ENCODE measurements at regions of chr17 and their contacts with region 1.

Region 1: DNA sequence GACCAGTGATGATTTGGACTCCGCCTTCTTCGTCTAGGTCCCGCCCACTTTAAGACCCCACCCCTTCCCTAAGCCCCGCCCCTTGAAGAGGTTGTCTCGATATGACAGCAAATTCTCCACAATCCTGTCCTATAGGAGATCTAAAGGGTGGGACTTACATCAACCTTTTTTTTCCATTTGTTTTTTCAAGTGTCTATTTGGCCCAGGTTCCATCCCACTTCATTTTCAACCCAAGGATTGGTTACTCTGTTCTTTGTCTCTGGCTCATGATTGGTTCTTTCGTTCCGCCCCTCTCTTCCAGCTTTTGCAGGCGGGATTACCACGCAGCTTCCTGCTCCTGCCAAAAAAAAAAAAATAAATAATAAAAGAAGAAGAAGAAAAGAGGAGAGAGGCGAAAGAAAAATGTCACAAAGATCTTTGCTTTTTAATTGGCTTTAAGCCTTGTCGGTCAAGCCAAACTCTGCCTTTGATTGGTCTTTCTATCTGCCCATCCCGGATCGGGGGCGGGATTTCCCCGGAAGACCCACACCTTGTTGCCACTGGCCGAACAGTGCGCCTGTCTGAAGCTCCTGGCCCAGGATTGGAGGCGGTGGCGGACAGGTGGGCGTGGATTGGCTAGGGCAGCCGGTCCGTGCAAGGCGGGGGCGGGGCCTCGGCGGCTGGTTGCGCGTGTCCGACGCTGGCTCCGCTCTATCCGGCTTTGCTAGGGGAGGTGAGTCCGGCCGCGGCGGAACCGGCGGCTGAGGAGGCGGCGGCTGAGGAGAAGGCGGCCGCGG is 1.2 kb upstream of the NLK start:
- DNase-seq: peak; percentile 99 to 100 (median 99)
- ATAC-seq: peak; percentile 97
- H3K4me3 ChIP-seq: peak overlapping the region; percentile 64
- H3K27ac ChIP-seq: peak overlapping the region; percentile 64
- H3K4me1 ChIP-seq: peaks cover 16 to 20% of the 10 kb centered on the region in 2 experiments; a peak in 4 of 5 replicates
- H3K27me3 ChIP-seq: no peaks in the 10 kb centered on the region
- CTCF ChIP-seq: peak in 1 of 3 experiments; percentile 37; a peak in 2 of 6 replicates
- EP300 ChIP-seq: no peak
- POLR2A ChIP-seq: peak; percentile 64
- RAD21 ChIP-seq: no peak

Region 2: GRCh38 chr17:27892866-27893769 is 148.1 kb before region 1 on chr17 and contains the start of gene LYRM9:
- CTCF ChIA-PET with region 1: no interaction called
- POLR2A ChIA-PET with region 1: no interaction called
- in situ Hi-C with region 1: no loop called
- intact Hi-C with region 1: loop called (anchors 5 kb)
- DNase-seq: peak; percentile 93 to 98 (median 96)
- ATAC-seq: peak; percentile 99
- H3K4me3 ChIP-seq: peak within 1 kb of the TSS; percentile 47
- H3K27ac ChIP-seq: peak within 1 kb of the TSS; percentile 71
- H3K4me1 ChIP-seq: peaks cover 10 to 35% of the 10 kb centered on the region in 2 experiments
- H3K27me3 ChIP-seq: no peaks in the 10 kb centered on the region
- CTCF ChIP-seq: peak; percentile 84 to 86 (median 84)
- EP300 ChIP-seq: no peak
- POLR2A ChIP-seq: peak; percentile 52; the same call in 1 of the 2 replicates
- RAD21 ChIP-seq: peak; percentile 63 to 65
- polyA plus RNA-seq, gene LYRM9: 1.0 to 1.8 TPM

Region 3: GRCh38 chr17:27985306-27985705 is 56.0 kb before region 1 on chr17:
- CTCF ChIA-PET with region 1: no interaction called
- POLR2A ChIA-PET with region 1: interaction called, 3 read pairs
- in situ Hi-C with region 1: no loop called
- intact Hi-C with region 1: loop called (anchors 2 kb)
- DNase-seq: peak in 1 of 4 experiments; percentile 55
- ATAC-seq: peak; percentile 55
- H3K4me3 ChIP-seq: no peak overlapping the region
- H3K27ac ChIP-seq: peak overlapping the region; percentile 89
- H3K4me1 ChIP-seq: peaks cover 45 to 60% of the 10 kb centered on the region in 2 experiments
- H3K27me3 ChIP-seq: no peaks in the 10 kb centered on the region
- CTCF ChIP-seq: no peak
- EP300 ChIP-seq: no peak
- POLR2A ChIP-seq: no peak
- RAD21 ChIP-seq: no peak

Region 4: GRCh38 chr17:28053044-28053670 is 11.9 kb after region 1 on chr17:
- CTCF ChIA-PET with region 1: no interaction called
- POLR2A ChIA-PET with region 1: interaction called, 15 read pairs
- in situ Hi-C with region 1: no loop called
- intact Hi-C with region 1: no loop called
- DNase-seq: no peak
- ATAC-seq: peak; percentile 34; the same call in 1 of the 3 replicates
- H3K4me3 ChIP-seq: no peak overlapping the region
- H3K27ac ChIP-seq: no peak overlapping the region
- H3K4me1 ChIP-seq: peaks cover 0 to 21% of the 10 kb centered on the region in 2 experiments; a peak in 4 of 5 replicates
- H3K27me3 ChIP-seq: no peaks in the 10 kb centered on the region
- CTCF ChIP-seq: no peak
- EP300 ChIP-seq: no peak
- POLR2A ChIP-seq: no peak
- RAD21 ChIP-seq: no peak

Region 5: DNA sequence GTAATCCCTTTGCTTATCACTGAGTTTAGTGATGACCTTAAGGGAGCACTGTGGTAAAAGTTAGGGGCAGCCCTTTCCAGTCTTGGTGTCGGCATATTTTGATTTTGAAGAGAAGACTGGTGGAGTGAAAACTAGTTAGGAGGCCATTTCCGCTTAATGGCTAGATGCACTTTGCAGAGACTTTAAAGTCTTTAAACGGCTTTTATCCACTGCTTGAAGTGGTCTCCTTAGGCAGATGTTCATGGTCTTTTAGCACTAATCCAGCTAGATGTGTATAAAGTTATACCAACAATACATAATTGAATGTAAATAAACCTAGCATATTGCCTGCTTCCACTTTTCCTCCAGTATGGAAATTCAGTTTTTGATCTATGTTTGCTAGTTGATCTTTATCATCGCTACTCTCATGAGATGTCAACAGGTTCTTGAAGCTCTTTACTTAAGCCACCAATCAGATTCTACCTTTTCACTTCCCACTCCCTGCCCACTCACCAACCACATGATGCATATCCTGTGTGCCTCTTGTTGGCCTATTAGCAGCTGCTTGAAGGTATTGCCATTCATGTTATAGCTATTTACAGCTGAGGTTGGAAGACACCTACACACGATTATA is 133.2 kb after region 1 on chr17:
- CTCF ChIA-PET with region 1: no interaction called
- POLR2A ChIA-PET with region 1: no interaction called
- in situ Hi-C with region 1: no loop called
- intact Hi-C with region 1: loop called (anchors 10 kb)
- DNase-seq: no peak
- ATAC-seq: no peak
- H3K4me3 ChIP-seq: no peak overlapping the region
- H3K27ac ChIP-seq: no peak overlapping the region
- H3K4me1 ChIP-seq: peaks cover 8 to 31% of the 10 kb centered on the region in 2 experiments; a peak in 4 of 5 replicates
- H3K27me3 ChIP-seq: no peaks in the 10 kb centered on the region
- CTCF ChIP-seq: no peak
- EP300 ChIP-seq: no peak
- POLR2A ChIP-seq: no peak
- RAD21 ChIP-seq: no peak